ENCODE measurements at regions of chr11 and their contacts with region 1.

Region 1: DNA sequence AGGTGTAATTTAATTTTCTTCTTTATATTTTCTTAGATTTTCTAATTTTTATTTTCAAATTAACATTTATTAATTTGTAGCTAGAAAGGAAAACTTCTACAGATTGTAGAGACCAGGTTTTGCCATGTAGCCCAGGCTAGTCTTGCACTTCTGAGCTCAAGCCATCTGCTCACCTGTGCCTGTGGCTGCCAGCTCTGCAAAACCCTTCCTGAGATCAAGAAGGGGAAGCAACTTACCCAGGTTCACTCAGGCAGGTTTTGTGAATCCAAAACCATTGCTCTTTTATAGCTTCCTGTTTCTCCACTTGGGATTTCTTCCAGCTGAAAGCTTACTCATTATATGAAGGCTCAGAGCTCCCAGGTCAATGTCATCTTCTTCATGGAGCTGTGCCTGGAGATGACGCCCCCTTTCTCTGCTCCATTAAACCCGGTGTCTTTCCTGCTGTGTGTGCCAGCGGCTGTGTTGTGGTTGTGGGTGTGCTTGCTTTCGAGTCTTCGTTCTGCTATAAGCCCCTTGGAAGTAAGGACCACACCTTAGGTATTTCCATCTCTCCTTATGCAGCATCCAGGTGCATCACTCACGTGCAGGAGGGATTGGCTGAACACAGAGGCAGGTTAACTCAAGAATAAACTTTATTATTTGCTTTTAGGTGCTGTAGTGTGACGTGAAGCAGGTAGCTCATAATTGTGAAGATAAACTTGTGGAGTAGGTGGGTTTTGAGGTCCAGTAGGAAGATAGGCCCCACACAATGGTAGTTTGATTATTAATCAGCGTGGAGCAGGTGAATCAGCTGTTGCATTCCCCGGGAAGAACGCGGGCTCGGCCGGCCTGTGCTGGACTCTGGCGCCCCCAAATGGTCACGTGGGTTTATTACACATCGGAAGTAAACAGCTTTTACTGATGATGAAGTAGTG is 42.2 kb upstream of the INCENP start:
- DNase-seq: peak; percentile 72 to 76
- ATAC-seq: peak; percentile 89 to 94
- H3K4me3 ChIP-seq: no peak overlapping the region
- H3K27ac ChIP-seq: peak overlapping the region; percentile 20 to 66; a peak in 5 of 6 replicates
- H3K4me1 ChIP-seq: peaks cover 9% of the 10 kb centered on the region; the same call in 2 of the 3 replicates
- CTCF ChIP-seq: peak; percentile 96
- EP300 ChIP-seq: no peak
- POLR2A ChIP-seq: no peak
- RAD21 ChIP-seq: peak; percentile 98 to 99

Region 2: DNA sequence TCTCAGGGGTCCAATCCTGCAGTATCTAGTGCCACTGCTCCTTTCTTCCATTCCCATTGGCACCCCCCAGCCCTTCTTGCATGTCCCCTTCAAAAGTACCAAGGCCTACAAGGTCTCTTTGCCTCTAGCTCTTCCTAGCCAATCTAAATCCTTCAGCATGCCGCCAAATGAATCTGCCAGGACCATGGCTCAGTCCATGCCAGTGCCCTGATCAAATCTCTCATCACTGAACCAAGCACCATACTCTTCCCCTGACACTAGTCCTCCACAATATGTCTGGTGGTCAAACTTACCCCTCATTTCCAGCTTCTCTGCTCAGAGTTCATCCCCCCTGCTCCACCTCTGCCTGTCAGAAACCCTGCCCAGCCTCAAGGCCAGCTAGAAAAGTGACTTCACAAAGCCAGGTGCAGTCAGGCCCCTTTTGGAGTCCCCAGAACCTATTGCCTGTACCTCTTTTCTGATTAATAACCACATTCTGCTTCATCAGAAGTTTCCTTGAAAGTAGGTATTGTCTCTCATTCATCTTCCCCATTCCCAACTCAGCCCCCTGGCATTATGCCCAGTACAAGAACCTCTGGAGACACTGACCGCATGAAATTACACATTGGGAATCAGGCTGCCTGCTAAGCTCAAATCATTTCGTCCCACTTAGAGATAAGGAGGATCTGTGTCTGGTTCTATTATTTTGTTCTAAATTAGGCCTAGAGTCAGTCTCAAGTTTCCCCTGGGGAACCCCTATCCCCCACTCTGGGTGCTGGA is 277.6 kb before region 1 on chr11:
- CTCF ChIA-PET with region 1: interaction called, 28 read pairs
- POLR2A ChIA-PET with region 1: no interaction called
- DNase-seq: no peak
- ATAC-seq: no peak
- H3K4me3 ChIP-seq: no peak overlapping the region
- H3K27ac ChIP-seq: no peak overlapping the region
- H3K4me1 ChIP-seq: peaks cover 32% of the 10 kb centered on the region
- CTCF ChIP-seq: no peak
- EP300 ChIP-seq: no peak
- POLR2A ChIP-seq: no peak
- RAD21 ChIP-seq: no peak

Region 3: GRCh38 chr11:61891331-61892084 is 190.1 kb before region 1 on chr11 and contains the start of gene FADS3:
- CTCF ChIA-PET with region 1: interaction called, 406 read pairs
- POLR2A ChIA-PET with region 1: no interaction called
- DNase-seq: peak; percentile 74 to 76
- ATAC-seq: peak; percentile 79 to 87
- H3K4me3 ChIP-seq: peak within 1 kb of the TSS; percentile 73
- H3K27ac ChIP-seq: peak within 1 kb of the TSS; percentile 82 to 91
- H3K4me1 ChIP-seq: peaks cover 39% of the 10 kb centered on the region
- CTCF ChIP-seq: no peak; the same call in 2 of the 3 replicates
- EP300 ChIP-seq: no peak
- POLR2A ChIP-seq: peak; percentile 65
- RAD21 ChIP-seq: no peak
- polyA plus RNA-seq, gene FADS3: 17.5 and 22.3 TPM in 2 replicates

Region 4: DNA sequence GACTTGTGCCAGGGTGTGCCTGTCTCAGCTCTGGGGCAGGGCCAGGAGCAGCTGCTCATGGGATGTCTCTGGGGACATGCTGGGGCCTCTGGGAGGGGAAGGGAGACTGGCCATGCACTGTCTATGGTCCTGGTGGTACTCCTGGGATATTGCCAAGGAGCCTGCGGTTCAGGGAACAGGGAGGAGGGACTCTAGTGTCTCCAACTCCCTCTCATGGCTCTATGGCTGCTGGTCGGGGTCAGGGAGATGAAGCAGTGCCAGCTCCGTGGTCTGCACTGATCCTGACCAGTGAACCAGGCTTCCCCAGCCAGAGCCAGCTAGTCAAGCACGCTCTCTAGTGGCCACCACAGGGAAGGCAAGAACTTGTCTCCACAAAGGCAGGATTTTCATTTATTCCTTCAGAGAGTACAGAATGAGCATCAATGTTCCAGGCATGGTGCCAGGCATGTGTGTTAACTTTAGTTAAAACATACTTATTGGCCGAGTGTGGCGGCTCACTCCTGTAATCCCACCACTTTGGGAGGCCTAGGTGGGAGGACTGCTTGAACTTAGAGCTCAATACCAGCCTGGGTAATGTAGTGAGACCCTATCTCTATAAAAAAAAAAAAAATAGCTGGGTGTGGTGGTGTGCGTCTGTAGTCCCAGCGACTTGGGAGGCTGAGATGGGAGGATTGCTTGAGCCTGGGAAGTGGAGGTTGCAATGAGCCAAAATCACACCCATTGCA is 134.0 kb before region 1 on chr11:
- CTCF ChIA-PET with region 1: interaction called, 56 read pairs
- POLR2A ChIA-PET with region 1: no interaction called
- DNase-seq: peak; percentile 82 to 89
- ATAC-seq: peak; percentile 83 to 91
- H3K4me3 ChIP-seq: no peak overlapping the region
- H3K27ac ChIP-seq: peak overlapping the region; percentile 71 to 72
- H3K4me1 ChIP-seq: peaks cover 35% of the 10 kb centered on the region
- CTCF ChIP-seq: peak; percentile 97
- EP300 ChIP-seq: no peak
- POLR2A ChIP-seq: no peak
- RAD21 ChIP-seq: peak; percentile 98 to 99

Region 5: GRCh38 chr11:62054484-62055121 is 27.0 kb before region 1 on chr11:
- CTCF ChIA-PET with region 1: interaction called, 56 read pairs
- POLR2A ChIA-PET with region 1: no interaction called
- DNase-seq: peak; percentile 53 to 92
- ATAC-seq: peak; percentile 94 to 99
- H3K4me3 ChIP-seq: no peak overlapping the region
- H3K27ac ChIP-seq: peak overlapping the region; percentile 79 to 87
- H3K4me1 ChIP-seq: peaks cover 16% of the 10 kb centered on the region
- CTCF ChIP-seq: peak; percentile 91
- EP300 ChIP-seq: no peak
- POLR2A ChIP-seq: no peak
- RAD21 ChIP-seq: peak; percentile 97 to 98

Region 6: DNA sequence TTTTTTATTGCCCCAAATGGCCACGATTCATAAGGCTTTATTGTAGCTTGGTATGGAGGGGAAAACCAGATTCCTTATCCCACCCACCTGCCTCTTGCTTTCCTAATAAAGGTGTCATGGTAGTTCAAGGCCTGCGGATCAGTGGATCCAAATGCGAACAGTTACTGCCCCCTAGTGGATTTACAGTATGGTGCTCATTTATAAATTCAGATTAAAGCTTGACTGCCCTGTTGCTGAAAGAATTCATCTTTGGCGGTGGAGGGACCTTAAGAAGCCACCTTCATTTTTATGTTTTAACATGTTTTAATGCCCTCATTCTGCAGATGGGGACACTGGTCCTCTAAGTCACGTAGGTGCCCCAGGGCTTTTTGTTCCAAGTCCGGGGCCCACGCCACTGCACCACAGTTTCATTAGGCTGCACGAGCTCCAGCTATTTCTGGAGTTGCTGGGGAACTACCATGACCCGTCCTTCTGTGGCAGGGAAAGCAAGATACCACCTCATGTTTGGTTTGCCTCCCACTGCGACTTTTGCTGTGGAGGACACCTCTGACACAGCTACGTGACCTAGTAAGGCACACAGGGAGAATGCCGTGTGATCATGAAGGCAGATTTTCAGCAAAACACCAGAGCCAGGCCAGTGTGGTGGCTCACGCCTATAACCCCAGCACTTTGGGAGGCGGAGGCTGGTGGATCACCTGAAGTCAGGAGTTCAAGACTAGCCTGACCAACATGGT is 26.5 kb after region 1 on chr11:
- CTCF ChIA-PET with region 1: interaction called, 39 read pairs
- POLR2A ChIA-PET with region 1: interaction called, 3 read pairs
- DNase-seq: peak; percentile 49 to 74
- ATAC-seq: peak; percentile 73 to 82; a peak in 4 of 6 replicates
- H3K4me3 ChIP-seq: no peak overlapping the region
- H3K27ac ChIP-seq: peak overlapping the region in 1 of 2 experiments; percentile 29; a peak in 2 of 6 replicates
- H3K4me1 ChIP-seq: peaks cover 13% of the 10 kb centered on the region; the same call in 1 of the 3 replicates
- CTCF ChIP-seq: peak; percentile 93
- EP300 ChIP-seq: no peak
- POLR2A ChIP-seq: no peak
- RAD21 ChIP-seq: peak; percentile 91 to 96

Region 7: GRCh38 chr11:62201370-62201769 is 119.7 kb after region 1 on chr11:
- CTCF ChIA-PET with region 1: no interaction called
- POLR2A ChIA-PET with region 1: no interaction called
- DNase-seq: no peak
- ATAC-seq: no peak
- H3K4me3 ChIP-seq: no peak overlapping the region
- H3K27ac ChIP-seq: no peak overlapping the region
- H3K4me1 ChIP-seq: no peaks in the 10 kb centered on the region
- CTCF ChIP-seq: no peak
- EP300 ChIP-seq: no peak
- POLR2A ChIP-seq: no peak
- RAD21 ChIP-seq: no peak

Measured in A549 (cell line).